HCT116 (cell line): ENCODE measurements at regions of chr7 and their contacts with region 1.

Region 1: DNA sequence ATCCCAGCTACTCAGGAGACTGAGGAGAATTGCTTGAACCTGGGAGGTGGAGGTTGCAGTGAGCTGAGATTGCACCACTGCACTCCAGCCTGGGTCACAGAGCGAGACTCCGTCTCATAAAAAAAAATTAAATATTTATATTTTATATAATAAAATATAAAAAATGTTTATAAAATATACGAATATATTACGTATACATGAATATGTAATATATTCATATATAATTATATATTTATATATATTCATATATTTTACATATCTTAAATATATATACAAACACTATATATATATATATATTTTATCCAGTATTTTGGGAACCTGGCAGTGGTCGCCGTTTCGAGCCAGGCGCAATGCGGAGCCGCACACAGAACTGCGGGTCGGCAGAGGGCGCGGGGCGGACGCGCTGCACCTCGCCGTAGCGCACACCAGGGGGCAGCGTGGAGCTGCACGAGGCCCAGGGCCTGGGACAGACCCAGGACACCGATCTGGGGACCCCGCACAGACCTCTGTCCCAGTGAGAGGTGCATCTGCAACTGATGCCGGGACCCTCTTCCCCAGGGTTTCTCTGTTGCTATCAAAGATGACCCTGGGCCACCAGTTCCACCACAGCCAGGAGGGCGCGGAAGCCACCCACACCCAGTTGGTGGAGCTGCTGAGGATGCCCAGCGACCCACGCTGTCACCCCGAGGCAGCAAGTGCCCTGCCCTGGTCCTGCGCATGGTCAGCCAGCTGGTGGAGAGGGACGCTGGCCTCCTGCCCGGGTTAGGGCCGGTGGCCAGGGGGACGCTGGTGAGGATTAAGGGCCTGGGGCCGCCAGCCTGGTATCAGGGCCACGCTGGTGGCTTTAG is 22.7 kb downstream of the AP5Z1 start:
- DNase-seq: peak; percentile 16
- ATAC-seq: peak; percentile 94
- H3K4me3 ChIP-seq: no peak overlapping the region
- H3K27ac ChIP-seq: no peak overlapping the region
- H3K4me1 ChIP-seq: peaks cover 2 to 10% of the 10 kb centered on the region in 2 experiments; a peak in 2 of 4 replicates
- H3K27me3 ChIP-seq: no peaks in the 10 kb centered on the region
- CTCF ChIP-seq: peak; percentile 66 to 98 (median 80)
- POLR2A ChIP-seq: no peak
- RAD21 ChIP-seq: peak; percentile 85

Region 2: GRCh38 chr7:4883374-4884144 is 85.5 kb after region 1 on chr7 and contains the start of gene RADIL:
- CTCF ChIA-PET with region 1: interaction called, 5 read pairs
- POLR2A ChIA-PET with region 1: no interaction called
- RAD21 ChIA-PET with region 1: no interaction called
- intact Hi-C with region 1: loop called (anchors 2 kb)
- DNase-seq: peak; percentile 87
- ATAC-seq: peak; percentile 97
- H3K4me3 ChIP-seq: peak within 1 kb of the TSS; percentile 45 to 71
- H3K27ac ChIP-seq: peak within 1 kb of the TSS; percentile 63; the same call in 1 of the 2 replicates
- H3K4me1 ChIP-seq: peaks cover 0 to 8% of the 10 kb centered on the region in 2 experiments; a peak in 2 of 4 replicates
- H3K27me3 ChIP-seq: no peaks in the 10 kb centered on the region
- CTCF ChIP-seq: peak; percentile 80 to 93 (median 86)
- POLR2A ChIP-seq: no peak
- RAD21 ChIP-seq: peak; percentile 66
- total RNA-seq, gene RADIL: 5.3 TPM

Region 3: GRCh38 chr7:5088906-5089305 is 290.8 kb after region 1 on chr7:
- CTCF ChIA-PET with region 1: interaction called, 28 read pairs
- POLR2A ChIA-PET with region 1: interaction called, 3 read pairs
- RAD21 ChIA-PET with region 1: interaction called, 4 read pairs
- intact Hi-C with region 1: loop called (anchors 1 kb)
- DNase-seq: no peak
- ATAC-seq: peak; percentile 10
- H3K4me3 ChIP-seq: peak overlapping the region in 1 of 2 experiments; percentile 14; a peak in 1 of 4 replicates
- H3K27ac ChIP-seq: peak overlapping the region; percentile 42
- H3K4me1 ChIP-seq: peaks cover 4 to 13% of the 10 kb centered on the region in 2 experiments
- H3K27me3 ChIP-seq: no peaks in the 10 kb centered on the region
- CTCF ChIP-seq: no peak
- POLR2A ChIP-seq: no peak
- RAD21 ChIP-seq: no peak

Region 4: GRCh38 chr7:5177060-5177459 is 379.0 kb after region 1 on chr7:
- CTCF ChIA-PET with region 1: interaction called, 7 read pairs
- POLR2A ChIA-PET with region 1: no interaction called
- RAD21 ChIA-PET with region 1: no interaction called
- intact Hi-C with region 1: loop called (anchors 1 kb)
- DNase-seq: no peak
- ATAC-seq: no peak
- H3K4me3 ChIP-seq: no peak overlapping the region
- H3K27ac ChIP-seq: no peak overlapping the region
- H3K4me1 ChIP-seq: peaks cover 0 to 5% of the 10 kb centered on the region in 2 experiments; a peak in 2 of 4 replicates
- H3K27me3 ChIP-seq: no peaks in the 10 kb centered on the region
- CTCF ChIP-seq: no peak
- POLR2A ChIP-seq: no peak
- RAD21 ChIP-seq: no peak